ENCODE measurements at regions of chr11 and their contacts with region 1.

Region 1: DNA sequence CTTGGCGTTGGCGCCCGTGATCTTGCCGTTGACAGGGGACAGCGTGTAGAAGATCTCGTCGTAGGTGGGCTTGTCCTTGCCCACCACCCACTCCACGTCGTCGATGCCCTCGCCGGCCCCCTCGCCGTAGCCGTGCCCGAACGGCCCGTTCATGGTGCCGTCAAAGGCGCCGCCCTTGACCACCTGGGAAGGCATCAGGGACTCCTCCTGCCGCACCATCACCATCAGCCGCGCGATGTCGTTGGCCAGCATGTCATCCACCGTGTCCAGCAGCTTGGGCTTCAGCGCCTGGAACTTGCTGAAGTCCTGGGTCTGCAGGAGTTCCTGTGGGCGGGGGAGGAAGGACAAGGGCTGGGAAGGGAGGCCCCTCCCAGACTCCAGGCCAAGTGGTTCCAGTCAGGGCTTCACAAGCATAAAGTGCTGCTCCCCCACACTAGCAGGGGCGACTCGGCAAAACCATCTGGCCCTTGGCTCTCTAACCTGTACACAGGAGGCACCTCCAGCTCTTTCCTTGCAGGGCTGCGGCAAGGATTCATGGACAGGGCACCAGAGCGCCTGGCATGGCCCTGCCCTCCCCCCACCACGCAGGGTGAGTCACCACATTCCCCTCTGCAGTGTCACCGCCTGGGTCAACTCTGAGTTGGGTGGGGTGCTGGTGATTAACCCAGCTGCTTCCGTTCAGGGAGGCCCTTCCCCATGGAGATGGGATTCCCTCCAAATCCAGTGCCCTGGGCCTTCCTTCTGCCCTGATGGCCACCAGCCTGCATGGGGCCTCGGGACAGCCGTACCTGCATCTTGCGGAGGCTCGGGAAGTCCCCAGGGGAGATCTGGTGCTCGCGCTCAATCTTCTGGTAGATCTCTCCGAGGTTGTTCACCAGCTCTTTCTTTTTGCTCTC is 10.3 kb upstream of the CDC42BPG start:
- DNase-seq: peak; percentile 90 to 95
- H3K4me3 ChIP-seq: peak overlapping the region in 1 of 2 donors; percentile 6
- H3K27ac ChIP-seq: peak overlapping the region; percentile 82 to 97
- H3K4me1 ChIP-seq: peaks cover 6 to 93% (median 82%) of the 10 kb centered on the region in 4 donors
- H3K27me3 ChIP-seq: no peaks in the 10 kb centered on the region
- CTCF ChIP-seq: peak in 1 of 2 experiments; percentile 10

Region 2: GRCh38 chr11:63729326-63729725 is 1125.5 kb before region 1 on chr11:
- intact Hi-C with region 1: no loop called
- DNase-seq: no peak
- H3K4me3 ChIP-seq: no peak overlapping the region
- H3K27ac ChIP-seq: no peak overlapping the region
- H3K4me1 ChIP-seq: no peaks in the 10 kb centered on the region
- H3K27me3 ChIP-seq: no peaks in the 10 kb centered on the region
- CTCF ChIP-seq: no peak

Region 3: GRCh38 chr11:64868904-64869570 is 14.3 kb after region 1 on chr11:
- intact Hi-C with region 1: no loop called
- DNase-seq: peak in 1 of 2 donors; percentile 65
- H3K4me3 ChIP-seq: peak overlapping the region; percentile 6 to 8
- H3K27ac ChIP-seq: peak overlapping the region; percentile 91 to 97
- H3K4me1 ChIP-seq: peaks cover 9 to 99% (median 93%) of the 10 kb centered on the region in 4 donors
- H3K27me3 ChIP-seq: no peaks in the 10 kb centered on the region
- CTCF ChIP-seq: no peak

Region 4: GRCh38 chr11:65013692-65014145 is 158.9 kb after region 1 on chr11:
- intact Hi-C with region 1: loop called (anchors 5 kb)
- DNase-seq: peak; percentile 89 to 95
- H3K4me3 ChIP-seq: peak overlapping the region; percentile 68 to 70
- H3K27ac ChIP-seq: peak overlapping the region; percentile 94 to 95
- H3K4me1 ChIP-seq: peaks cover 6 to 23% (median 19%) of the 10 kb centered on the region in 4 donors
- H3K27me3 ChIP-seq: no peaks in the 10 kb centered on the region
- CTCF ChIP-seq: peak in 1 of 2 experiments; percentile 89

Measured in tibial artery (tissue), 4 donors.